Activated CD4-positive, alpha-beta T cell treated with anti-CD3 and anti-CD28 coated beads, Interleukin-2, amount 10 ng/mL, durations not matched to agents 24 days and 14 days (primary cell): ENCODE measurements at regions of chr20 and their contacts with region 1.

Region 1: GRCh38 chr20:49699200-49699992 is 14.3 kb downstream of the B4GALT5 start:
- DNase-seq: no peak
- H3K4me3 Mint-ChIP-seq: peak overlapping the region; percentile 8
- H3K27ac Mint-ChIP-seq: peak overlapping the region; percentile 49
- H3K4me1 Mint-ChIP-seq: peaks cover 52% of the 10 kb centered on the region
- H3K27me3 Mint-ChIP-seq: no peaks in the 10 kb centered on the region

Region 2: GRCh38 chr20:49476016-49476355 is 223.4 kb before region 1 on chr20:
- intact Hi-C with region 1: no loop called
- DNase-seq: no peak
- H3K4me3 Mint-ChIP-seq: no peak overlapping the region
- H3K27ac Mint-ChIP-seq: no peak overlapping the region
- H3K4me1 Mint-ChIP-seq: no peaks in the 10 kb centered on the region
- H3K27me3 Mint-ChIP-seq: peaks cover 43% of the 10 kb centered on the region

Region 3: DNA sequence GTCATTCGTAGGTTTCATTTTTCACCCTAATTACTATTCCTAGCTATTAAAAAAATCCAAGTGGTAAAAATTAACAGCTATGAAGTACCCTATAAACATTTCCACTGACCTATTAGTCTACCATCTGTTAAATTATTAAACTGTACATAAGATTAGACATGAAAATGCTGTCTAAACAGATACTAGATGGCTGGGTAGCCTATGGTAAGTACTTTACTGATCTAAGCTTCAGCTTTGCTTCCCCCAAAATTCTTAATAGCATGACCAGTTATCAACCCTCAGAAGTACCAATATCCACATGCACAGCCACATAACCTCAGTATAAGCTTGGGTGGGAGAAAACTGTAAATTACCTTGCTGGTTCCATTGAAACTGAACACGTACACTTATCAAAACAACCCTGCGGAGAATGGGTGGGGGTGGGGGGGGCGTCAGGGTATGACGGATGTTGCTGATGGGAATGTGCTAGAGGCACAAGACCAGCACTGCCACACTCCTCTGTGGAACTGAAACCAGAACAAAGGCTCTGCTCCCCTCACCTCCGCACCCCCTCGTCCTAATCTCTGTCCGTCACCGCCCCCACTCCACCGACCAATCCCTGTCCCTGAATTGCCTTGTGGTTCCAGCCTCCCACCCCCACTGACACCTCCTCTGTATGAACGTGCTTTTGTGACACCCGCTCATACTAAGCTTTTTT is 31.1 kb before region 1 on chr20:
- intact Hi-C with region 1: loop called (anchors 1 kb)
- DNase-seq: peak; percentile 72
- H3K4me3 Mint-ChIP-seq: no peak overlapping the region
- H3K27ac Mint-ChIP-seq: peak overlapping the region; percentile 70
- H3K4me1 Mint-ChIP-seq: peaks cover 53% of the 10 kb centered on the region
- H3K27me3 Mint-ChIP-seq: peaks cover 3% of the 10 kb centered on the region

Region 4: GRCh38 chr20:49762940-49763766 is 63.8 kb after region 1 on chr20:
- intact Hi-C with region 1: no loop called
- DNase-seq: no peak
- H3K4me3 Mint-ChIP-seq: no peak overlapping the region
- H3K27ac Mint-ChIP-seq: no peak overlapping the region
- H3K4me1 Mint-ChIP-seq: peaks cover 13% of the 10 kb centered on the region
- H3K27me3 Mint-ChIP-seq: peaks cover 66% of the 10 kb centered on the region

Region 5: DNA sequence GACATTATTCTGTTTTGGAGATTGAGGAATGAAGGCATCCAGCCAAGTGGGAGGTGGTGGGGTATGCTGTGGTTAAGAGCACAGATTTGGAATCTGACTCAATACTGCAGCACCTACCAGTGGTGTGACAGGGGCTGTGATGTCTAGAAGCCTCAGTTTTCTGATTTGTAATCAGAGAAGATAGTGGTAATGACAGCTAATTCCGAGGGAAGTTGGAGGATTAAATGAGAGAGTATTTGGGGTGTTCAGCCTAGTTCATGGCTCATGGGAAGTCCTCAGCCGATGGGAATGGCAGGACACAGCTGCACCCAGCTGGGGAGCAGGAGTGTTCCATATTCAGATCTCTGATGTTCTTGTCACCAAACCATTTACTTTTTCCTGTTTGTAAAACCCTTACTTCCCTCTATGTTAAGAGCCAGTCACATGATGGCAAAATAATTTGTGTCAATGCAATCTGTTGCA is 122.5 kb after region 1 on chr20:
- intact Hi-C with region 1: loop called (anchors 5 kb)
- DNase-seq: peak; percentile 58
- H3K4me3 Mint-ChIP-seq: peak overlapping the region; percentile 56
- H3K27ac Mint-ChIP-seq: peak overlapping the region; percentile 72
- H3K4me1 Mint-ChIP-seq: peaks cover 46% of the 10 kb centered on the region
- H3K27me3 Mint-ChIP-seq: no peaks in the 10 kb centered on the region